ENCODE measurements at regions of chr9 and their contacts with region 1.

Region 1: GRCh38 chr9:92716557-92716956 is 46.6 kb upstream of the IPPK start:
- DNase-seq: peak; percentile 62 to 64
- H3K4me3 ChIP-seq: no peak overlapping the region
- H3K27ac ChIP-seq: no peak overlapping the region
- H3K4me1 ChIP-seq: no peaks in the 10 kb centered on the region
- H3K27me3 ChIP-seq: no peaks in the 10 kb centered on the region
- CTCF ChIP-seq: peak; percentile 81 to 86 (median 82)
- POLR2A ChIP-seq: no peak

Region 2: DNA sequence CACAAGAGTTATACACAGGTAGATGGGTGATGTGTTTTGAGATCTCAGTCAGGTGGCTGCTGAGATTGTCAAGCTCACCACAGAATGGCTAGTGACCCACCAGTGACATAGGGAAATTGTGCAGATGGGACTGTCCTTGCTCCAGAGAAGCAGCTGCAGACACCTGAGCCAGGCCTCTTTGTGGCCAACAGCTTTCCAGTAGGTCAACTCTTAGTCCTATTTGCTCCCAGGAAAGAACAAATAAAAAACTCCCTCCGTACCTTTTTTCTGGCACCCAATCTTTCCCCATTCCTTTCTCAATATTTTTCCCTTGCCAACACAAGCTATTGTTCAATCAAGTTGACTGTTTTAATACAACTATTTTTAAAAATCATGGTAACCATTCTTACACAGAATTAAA is 437.3 kb before region 1 on chr9:
- intact Hi-C with region 1: no loop called
- DNase-seq: no peak
- H3K4me3 ChIP-seq: no peak overlapping the region
- H3K27ac ChIP-seq: peak overlapping the region in 1 of 2 donors; percentile 46
- H3K4me1 ChIP-seq: no peaks in the 10 kb centered on the region
- H3K27me3 ChIP-seq: no peaks in the 10 kb centered on the region
- CTCF ChIP-seq: no peak
- POLR2A ChIP-seq: no peak

Region 3: GRCh38 chr9:92790542-92791527 is 74.3 kb after region 1 on chr9:
- intact Hi-C with region 1: loop called (anchors 5 kb)
- DNase-seq: peak; percentile 80 to 81
- H3K4me3 ChIP-seq: no peak overlapping the region
- H3K27ac ChIP-seq: no peak overlapping the region
- H3K4me1 ChIP-seq: no peaks in the 10 kb centered on the region
- H3K27me3 ChIP-seq: no peaks in the 10 kb centered on the region
- CTCF ChIP-seq: peak; percentile 81 to 90 (median 85)
- POLR2A ChIP-seq: no peak

Measured in uterus (tissue), 4 donors.